Mammary epithelial cell (primary cell): ENCODE measurements at regions of chr5 and their contacts with region 1.

Region 1: DNA sequence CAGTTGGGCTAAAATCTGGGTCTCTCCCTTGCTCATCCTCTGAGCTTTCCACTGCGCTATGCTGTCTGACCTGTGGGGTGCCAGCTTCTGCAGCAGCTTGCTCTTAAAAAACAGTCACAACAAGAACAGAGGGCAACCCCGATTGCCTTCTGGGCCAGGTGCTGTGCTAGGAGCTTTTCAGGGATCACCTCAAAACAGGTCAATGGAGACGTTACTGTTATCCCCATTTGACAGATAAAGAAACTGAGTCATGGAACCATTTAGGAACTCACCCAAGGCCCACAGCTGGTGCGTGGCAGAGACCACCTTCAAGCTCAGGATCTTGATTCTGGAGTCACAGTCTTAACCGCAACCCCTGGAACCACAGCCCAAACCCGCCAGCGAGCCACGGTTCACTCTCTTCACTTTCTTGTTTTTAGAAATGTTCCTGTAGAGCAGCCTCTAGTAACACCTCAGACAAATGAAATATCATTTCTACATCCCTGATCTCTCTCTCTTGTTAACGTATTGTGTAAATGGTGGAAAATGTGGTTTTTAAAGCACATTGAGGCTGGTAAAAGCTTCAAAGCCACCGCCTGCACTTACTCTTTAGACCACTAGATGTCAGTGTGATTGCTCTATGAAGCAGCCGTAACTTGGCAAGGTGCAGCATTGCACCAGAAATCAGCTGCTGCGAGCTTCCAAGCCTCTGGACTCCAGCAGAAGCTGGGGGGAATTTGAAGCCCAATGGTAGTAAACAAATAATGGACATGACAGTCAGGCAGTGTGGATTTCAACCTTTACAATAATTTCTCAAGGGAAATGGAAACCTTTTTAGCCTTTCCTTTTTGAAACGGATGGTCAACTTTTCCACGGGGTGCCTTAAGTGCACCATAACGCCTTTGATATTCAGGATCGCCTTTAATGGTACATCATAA is 1.7 kb downstream of the FYB1 start:
- DNase-seq: peak; percentile 78
- H3K4me3 ChIP-seq: no peak overlapping the region
- H3K27ac ChIP-seq: no peak overlapping the region
- H3K4me1 ChIP-seq: peaks cover 17% of the 10 kb centered on the region
- H3K27me3 ChIP-seq: no peaks in the 10 kb centered on the region
- CTCF ChIP-seq: peak; percentile 97 to 99

Region 2: DNA sequence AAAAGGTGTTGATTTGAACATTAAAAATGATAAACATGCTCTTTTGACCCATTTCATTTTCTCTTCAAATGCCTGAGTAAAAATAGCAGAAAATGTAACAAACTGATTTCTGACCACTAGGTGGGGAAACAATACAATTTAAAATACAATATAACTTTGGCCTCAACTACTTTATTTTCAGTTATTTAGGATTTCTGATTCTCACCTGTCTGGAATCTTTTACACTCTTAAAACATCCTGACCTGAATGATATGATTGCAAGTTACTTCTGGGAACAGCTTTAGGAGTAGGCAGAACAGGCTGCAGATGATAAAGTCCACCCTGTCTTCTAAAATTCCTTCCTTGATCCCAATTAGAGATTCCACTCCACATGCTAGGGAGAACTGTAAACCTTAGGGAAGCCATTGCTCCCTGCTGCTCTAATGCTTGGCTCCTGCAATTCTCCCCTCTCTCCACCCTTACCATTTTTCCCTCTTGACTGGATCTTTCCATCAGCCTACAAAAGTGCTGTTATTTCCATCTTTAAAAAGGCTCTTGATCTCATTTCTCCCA is 68.6 kb before region 1 on chr5:
- CTCF ChIA-PET with region 1: no interaction called
- dilution Hi-C with region 1: no loop called
- in situ Hi-C with region 1: no loop called
- intact Hi-C with region 1: loop called (anchors 2 kb)
- DNase-seq: no peak
- H3K4me3 ChIP-seq: no peak overlapping the region
- H3K27ac ChIP-seq: no peak overlapping the region
- H3K4me1 ChIP-seq: no peaks in the 10 kb centered on the region
- H3K27me3 ChIP-seq: no peaks in the 10 kb centered on the region
- CTCF ChIP-seq: peak; percentile 33 to 41

Region 3: GRCh38 chr5:39283231-39283818 is 65.7 kb after region 1 on chr5:
- CTCF ChIA-PET with region 1: interaction called, 4 read pairs
- dilution Hi-C with region 1: no loop called
- in situ Hi-C with region 1: loop called (anchors 5 kb)
- intact Hi-C with region 1: loop called (anchors 1 kb)
- DNase-seq: peak; percentile 76
- H3K4me3 ChIP-seq: no peak overlapping the region
- H3K27ac ChIP-seq: no peak overlapping the region
- H3K4me1 ChIP-seq: no peaks in the 10 kb centered on the region
- H3K27me3 ChIP-seq: no peaks in the 10 kb centered on the region
- CTCF ChIP-seq: peak; percentile 63 to 78

Region 4: DNA sequence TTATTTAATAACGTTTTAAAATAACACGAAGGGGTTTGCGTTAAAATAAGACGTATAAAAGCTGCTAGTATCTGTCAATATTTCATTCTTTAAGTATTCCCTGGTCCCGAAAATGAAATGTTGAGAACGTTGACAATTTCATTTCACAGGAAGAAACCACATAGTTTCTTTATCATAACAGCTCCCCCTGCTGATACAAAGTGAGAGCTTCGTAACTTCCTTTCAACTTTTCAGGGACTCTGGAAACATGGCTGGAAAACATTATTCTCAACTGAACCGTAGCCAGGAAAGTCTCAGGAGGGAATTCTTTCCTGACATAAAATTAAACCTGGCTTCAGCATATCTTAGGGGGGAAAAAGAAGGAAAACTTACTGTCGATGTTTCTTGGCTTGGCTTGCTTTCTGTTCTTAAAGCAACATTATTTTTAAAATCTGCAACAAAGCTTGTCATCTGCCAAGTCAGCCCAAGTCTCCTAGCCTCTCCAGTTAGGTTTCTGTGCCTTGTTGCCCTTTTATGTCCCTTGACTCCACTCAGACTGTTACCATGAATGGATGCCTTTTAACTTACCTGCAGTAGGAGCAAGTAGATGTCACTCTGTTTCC is 330.0 kb after region 1 on chr5:
- CTCF ChIA-PET with region 1: no interaction called
- dilution Hi-C with region 1: no loop called
- in situ Hi-C with region 1: no loop called
- intact Hi-C with region 1: loop called (anchors 5 kb)
- DNase-seq: peak; percentile 44
- H3K4me3 ChIP-seq: no peak overlapping the region
- H3K27ac ChIP-seq: no peak overlapping the region
- H3K4me1 ChIP-seq: peaks cover 3% of the 10 kb centered on the region
- H3K27me3 ChIP-seq: no peaks in the 10 kb centered on the region
- CTCF ChIP-seq: peak; percentile 74 to 77